K562 (cell line): ENCODE measurements at regions of chr17 and their contacts with region 1.

Region 1: DNA sequence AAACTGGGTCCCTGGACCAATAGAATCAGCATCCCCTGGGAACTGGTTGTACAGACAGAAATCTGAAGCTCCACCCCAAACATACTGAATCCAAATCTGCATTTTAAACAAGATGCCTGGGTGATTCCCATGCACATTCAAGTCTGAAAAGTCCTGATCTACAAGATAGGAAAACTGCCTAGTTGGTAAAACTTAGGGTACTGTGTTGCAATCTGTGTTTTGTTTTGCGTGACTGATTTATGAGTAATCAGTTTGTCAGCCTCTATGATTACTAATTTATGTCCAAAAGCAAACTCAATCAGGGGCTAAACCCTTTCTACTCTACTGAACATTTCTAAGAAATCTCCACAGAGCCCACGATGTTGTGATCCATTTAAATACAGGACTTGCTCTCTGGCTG is 103.8 kb downstream of the YPEL2 start:
- DNase-seq: no peak
- ATAC-seq: no peak
- H3K4me3 ChIP-seq: no peak overlapping the region
- H3K27ac ChIP-seq: no peak overlapping the region
- H3K4me1 ChIP-seq: no peaks in the 10 kb centered on the region
- H3K27me3 ChIP-seq: peaks cover 12 to 19% of the 10 kb centered on the region in 2 experiments; a peak in 4 of 5 replicates
- CTCF ChIP-seq: no peak
- EP300 ChIP-seq: no peak
- POLR2A ChIP-seq: no peak
- RAD21 ChIP-seq: no peak

Region 2: DNA sequence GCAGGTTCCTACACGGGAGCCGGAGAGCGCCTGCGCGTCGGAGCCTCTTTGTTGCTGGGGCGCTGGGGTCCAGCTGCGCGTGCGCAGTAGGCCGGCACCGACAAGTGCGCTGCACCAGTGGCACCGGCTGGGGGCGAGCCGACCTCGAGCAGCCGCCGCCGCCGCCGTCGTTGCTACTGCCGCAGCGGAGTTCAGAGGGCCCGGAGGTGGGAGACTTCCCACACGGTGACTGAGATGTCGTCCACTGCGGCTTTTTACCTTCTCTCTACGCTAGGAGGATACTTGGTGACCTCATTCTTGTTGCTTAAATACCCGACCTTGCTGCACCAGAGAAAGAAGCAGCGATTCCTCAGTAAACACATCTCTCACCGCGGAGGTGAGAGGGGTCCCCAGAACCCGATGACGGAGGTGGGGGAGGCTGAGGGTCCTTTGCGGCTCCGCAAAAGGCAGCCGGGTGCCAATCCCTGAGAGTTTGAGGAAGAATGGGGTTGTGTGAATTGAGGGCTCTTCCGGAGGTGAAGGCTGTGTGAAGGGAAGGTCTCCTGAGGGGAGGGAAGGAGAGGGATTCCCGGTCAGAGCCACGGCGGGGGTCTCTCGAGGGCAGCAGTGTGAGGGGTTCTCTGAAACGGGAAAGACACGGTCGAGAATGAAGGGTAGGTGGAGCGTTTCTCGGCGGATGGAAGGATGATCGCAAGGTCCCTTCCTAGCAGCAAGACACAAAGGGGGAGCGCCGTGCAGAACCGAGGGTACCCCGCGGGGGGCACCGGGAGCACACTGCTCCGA is 214.7 kb before region 1 on chr17 and contains the start of gene GDPD1:
- CTCF ChIA-PET with region 1: no interaction called
- POLR2A ChIA-PET with region 1: no interaction called
- in situ Hi-C with region 1: loop called (anchors 5 kb)
- intact Hi-C with region 1: loop called (anchors 2 kb)
- DNase-seq: peak; percentile 95 to 99 (median 97)
- ATAC-seq: peak; percentile 98
- H3K4me3 ChIP-seq: peak within 1 kb of the TSS; percentile 93
- H3K27ac ChIP-seq: peak within 1 kb of the TSS; percentile 90
- H3K4me1 ChIP-seq: peaks cover 3 to 11% of the 10 kb centered on the region in 2 experiments; a peak in 2 of 5 replicates
- H3K27me3 ChIP-seq: no peaks in the 10 kb centered on the region
- CTCF ChIP-seq: peak; percentile 80 to 89 (median 83)
- EP300 ChIP-seq: no peak
- POLR2A ChIP-seq: peak; percentile 78
- RAD21 ChIP-seq: peak; percentile 82 to 90
- polyA plus RNA-seq, gene GDPD1: 7.8 to 8.1 TPM